RWPE1 (cell line): ENCODE measurements at regions of chr14 and their contacts with region 1.

Region 1: DNA sequence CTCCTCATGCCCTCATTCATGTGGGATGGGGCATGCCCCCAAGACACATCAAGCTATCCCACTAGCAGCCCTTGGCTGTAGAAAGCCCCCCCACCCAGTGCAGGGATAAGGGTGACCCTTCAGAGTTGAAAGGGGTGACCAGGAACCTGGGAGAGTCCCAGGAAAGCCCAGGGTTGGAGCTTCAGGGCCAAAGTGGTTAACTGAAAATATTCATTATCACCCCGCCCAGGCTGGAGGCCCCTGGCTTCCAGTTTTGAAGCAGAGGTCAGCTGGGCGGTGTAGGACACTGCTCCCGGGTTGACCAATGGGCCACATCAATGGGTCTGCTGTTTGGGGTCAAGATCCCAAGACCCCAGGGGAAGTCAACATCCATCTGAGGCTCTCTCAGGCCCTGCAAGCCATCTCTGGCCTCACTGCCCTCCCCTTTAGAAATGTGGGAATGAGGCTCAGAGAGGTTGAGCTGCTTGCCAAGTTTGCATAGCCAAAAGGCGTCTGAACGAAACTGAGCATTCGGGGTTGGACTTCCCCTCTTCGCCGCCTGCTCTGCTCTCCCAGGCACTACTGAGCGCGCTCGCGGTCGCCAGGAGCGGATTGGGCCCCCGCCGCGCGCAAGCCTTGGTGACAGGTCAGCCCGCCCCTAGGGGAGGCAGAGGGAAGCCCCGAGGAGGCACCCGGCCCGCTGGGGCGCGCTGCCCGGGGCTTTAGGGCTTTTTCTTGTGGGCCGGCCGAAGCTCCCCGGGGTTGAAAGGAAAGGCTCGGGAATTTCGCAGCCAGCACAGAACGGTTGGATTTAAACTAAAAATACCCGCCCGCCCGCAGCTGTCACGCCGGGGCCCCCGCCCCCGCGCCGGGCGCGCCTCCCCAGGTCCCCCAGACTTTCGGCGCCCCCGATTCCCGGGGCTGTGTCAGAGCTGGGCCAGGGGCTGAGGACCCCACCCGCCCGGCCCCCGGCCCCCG is 576 bp downstream of the SYNE3 start:
- DNase-seq: no peak
- H3K27ac ChIP-seq: peak overlapping the region; percentile 79
- CTCF ChIP-seq: peak; percentile 41; the same call in 1 of the 2 replicates

Region 2: DNA sequence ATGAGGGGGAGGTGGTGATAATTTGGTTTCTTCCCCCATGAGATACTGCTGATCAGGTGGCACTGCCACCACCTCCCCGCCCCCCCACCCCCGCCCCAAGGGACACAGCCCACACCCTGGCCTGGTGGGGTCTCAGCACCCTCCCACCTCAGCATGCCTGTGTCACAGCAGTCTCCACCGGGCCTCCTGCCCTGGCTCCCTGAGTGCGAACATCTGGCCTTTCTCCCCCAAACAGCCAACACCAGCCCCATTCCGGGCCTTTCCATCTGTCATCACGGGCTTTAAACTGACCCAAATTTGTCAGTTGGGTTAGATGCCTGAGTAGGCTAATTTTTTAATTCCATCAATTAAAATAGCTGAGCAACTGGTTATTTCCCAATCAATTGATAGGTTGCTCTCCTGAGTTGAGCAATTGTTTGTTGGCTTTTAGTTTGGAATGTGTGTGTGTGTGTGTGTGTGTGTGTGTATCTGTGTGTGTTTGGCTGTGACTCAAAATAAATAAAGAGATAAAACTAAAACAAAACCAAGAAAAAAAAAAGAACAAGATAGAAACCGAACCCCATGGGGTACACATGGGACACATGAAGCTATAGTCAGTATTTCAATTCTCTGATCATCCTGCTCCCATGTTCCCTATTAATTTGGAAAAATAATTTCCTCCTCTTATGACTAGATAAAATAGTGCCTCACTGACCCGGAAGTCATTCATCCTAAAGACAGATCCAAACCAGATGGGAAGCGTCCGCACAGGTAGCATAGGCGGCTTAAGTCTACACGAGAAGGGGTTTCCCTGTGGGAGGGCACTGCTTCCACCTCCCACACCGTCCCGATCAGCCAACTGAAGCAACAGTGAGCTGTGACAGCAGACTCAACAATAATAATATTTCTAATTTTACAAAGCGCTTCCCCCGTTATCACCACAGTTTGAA is 1014.0 kb before region 1 on chr14:
- CTCF ChIA-PET with region 1: no interaction called
- POLR2A ChIA-PET with region 1: no interaction called
- DNase-seq: no peak
- H3K27ac ChIP-seq: no peak overlapping the region
- CTCF ChIP-seq: no peak

Region 3: GRCh38 chr14:95442633-95443021 is 73.2 kb before region 1 on chr14:
- CTCF ChIA-PET with region 1: interaction called, 20 read pairs
- POLR2A ChIA-PET with region 1: no interaction called
- DNase-seq: peak; percentile 81
- H3K27ac ChIP-seq: no peak overlapping the region; the same call in 1 of the 2 replicates
- CTCF ChIP-seq: peak; percentile 92

Region 4: GRCh38 chr14:95547631-95548327 is 31.9 kb after region 1 on chr14:
- CTCF ChIA-PET with region 1: no interaction called
- POLR2A ChIA-PET with region 1: no interaction called
- DNase-seq: peak; percentile 60
- H3K27ac ChIP-seq: peak overlapping the region; percentile 66
- CTCF ChIP-seq: no peak

Region 5: GRCh38 chr14:95697764-95698163 is 181.9 kb after region 1 on chr14:
- CTCF ChIA-PET with region 1: no interaction called
- POLR2A ChIA-PET with region 1: no interaction called
- DNase-seq: no peak
- H3K27ac ChIP-seq: no peak overlapping the region
- CTCF ChIP-seq: no peak

Region 6: GRCh38 chr14:95895720-95896119 is 379.8 kb after region 1 on chr14:
- CTCF ChIA-PET with region 1: no interaction called
- POLR2A ChIA-PET with region 1: no interaction called
- DNase-seq: peak; percentile 32
- H3K27ac ChIP-seq: no peak overlapping the region
- CTCF ChIP-seq: no peak